Activated CD8-positive, alpha-beta T cell treated with anti-CD3 and anti-CD28 coated beads for 36 hours (primary cell): ENCODE measurements at regions of chr10 and their contacts with region 1.

Region 1: DNA sequence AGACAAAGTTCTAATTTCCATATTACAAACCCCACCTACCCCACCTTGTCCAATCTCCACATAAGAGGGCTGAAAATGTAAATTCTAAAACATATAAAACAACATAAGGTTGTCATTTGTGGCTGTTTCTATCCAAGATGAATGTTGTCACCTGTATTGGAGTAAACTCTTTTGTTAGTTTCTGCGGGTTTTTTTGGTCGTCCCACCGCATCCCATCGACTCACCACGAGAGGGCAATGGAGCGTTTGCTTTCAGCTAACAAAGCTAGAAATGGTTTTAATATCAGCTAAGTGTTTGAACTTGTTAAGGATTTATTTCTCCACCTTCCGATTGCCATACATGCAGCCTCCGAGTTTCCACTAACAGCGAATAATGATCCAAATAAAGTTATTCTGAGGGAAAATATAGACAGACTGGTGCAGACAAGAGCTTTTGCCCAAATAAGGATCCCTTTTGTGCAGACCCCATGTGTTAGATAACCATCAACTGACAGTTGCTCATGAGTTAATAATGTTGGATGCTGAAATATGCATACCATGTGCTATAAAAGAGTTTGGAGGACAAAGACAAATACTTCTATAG is 137.2 kb downstream of the ARID5B start:
- DNase-seq: peak; percentile 87
- ATAC-seq: peak; percentile 75
- H3K4me3 Mint-ChIP-seq: peak overlapping the region; percentile 1
- H3K27ac Mint-ChIP-seq: peak overlapping the region; percentile 82
- H3K4me1 Mint-ChIP-seq: peaks cover 62% of the 10 kb centered on the region
- H3K27me3 Mint-ChIP-seq: no peaks in the 10 kb centered on the region
- CTCF ChIP-seq: peak; percentile 81

Region 2: GRCh38 chr10:62025901-62026879 is 12.5 kb before region 1 on chr10:
- CTCF ChIA-PET with region 1: interaction called, 13 read pairs
- POLR2A ChIA-PET with region 1: no interaction called
- intact Hi-C with region 1: no loop called
- DNase-seq: no peak
- ATAC-seq: no peak
- H3K4me3 Mint-ChIP-seq: no peak overlapping the region
- H3K27ac Mint-ChIP-seq: peak overlapping the region; percentile 40
- H3K4me1 Mint-ChIP-seq: peaks cover 67% of the 10 kb centered on the region
- H3K27me3 Mint-ChIP-seq: no peaks in the 10 kb centered on the region
- CTCF ChIP-seq: no peak

Region 3: GRCh38 chr10:62063795-62064472 is 25.2 kb after region 1 on chr10:
- CTCF ChIA-PET with region 1: interaction called, 10 read pairs
- POLR2A ChIA-PET with region 1: interaction called, 3 read pairs
- intact Hi-C with region 1: no loop called
- DNase-seq: no peak
- ATAC-seq: peak; percentile 71
- H3K4me3 Mint-ChIP-seq: peak overlapping the region; percentile 29
- H3K27ac Mint-ChIP-seq: peak overlapping the region; percentile 86
- H3K4me1 Mint-ChIP-seq: peaks cover 67% of the 10 kb centered on the region
- H3K27me3 Mint-ChIP-seq: no peaks in the 10 kb centered on the region
- CTCF ChIP-seq: no peak

Region 4: GRCh38 chr10:62528441-62528840 is 489.7 kb after region 1 on chr10:
- CTCF ChIA-PET with region 1: no interaction called
- POLR2A ChIA-PET with region 1: no interaction called
- intact Hi-C with region 1: no loop called
- DNase-seq: no peak
- ATAC-seq: peak; percentile 94
- H3K4me3 Mint-ChIP-seq: peak overlapping the region; percentile 9
- H3K27ac Mint-ChIP-seq: peak overlapping the region; percentile 39
- H3K4me1 Mint-ChIP-seq: peaks cover 40% of the 10 kb centered on the region
- H3K27me3 Mint-ChIP-seq: no peaks in the 10 kb centered on the region
- CTCF ChIP-seq: no peak